ENCODE measurements at regions of chr2 and their contacts with region 1.

Region 1: DNA sequence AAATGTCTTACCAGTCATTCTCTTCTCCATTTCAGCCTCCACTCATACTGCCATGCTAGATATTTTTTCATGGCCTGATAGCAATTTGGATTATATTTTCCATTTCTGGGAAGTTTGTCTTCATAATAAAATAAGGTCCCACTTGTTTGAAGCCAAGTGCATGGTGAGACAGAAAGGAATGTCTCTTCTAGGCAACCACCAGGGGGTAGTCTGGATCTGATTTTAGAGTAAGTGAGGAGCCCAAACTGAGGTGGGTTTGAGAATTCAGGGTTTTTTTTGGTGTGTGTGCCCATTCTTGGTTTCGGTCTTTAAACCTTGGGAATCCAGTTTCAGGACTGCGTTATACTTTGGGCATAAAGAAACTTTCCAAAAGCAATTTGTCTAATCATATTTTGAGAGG is 315.5 kb downstream of the RPRM start:
- DNase-seq: no peak
- H3K4me3 ChIP-seq: no peak overlapping the region
- H3K27ac ChIP-seq: no peak overlapping the region
- H3K4me1 ChIP-seq: no peaks in the 10 kb centered on the region
- H3K27me3 ChIP-seq: no peaks in the 10 kb centered on the region
- CTCF ChIP-seq: peak; percentile 36 to 49 (median 42)
- EP300 ChIP-seq: no peak
- POLR2A ChIP-seq: no peak

Region 2: DNA sequence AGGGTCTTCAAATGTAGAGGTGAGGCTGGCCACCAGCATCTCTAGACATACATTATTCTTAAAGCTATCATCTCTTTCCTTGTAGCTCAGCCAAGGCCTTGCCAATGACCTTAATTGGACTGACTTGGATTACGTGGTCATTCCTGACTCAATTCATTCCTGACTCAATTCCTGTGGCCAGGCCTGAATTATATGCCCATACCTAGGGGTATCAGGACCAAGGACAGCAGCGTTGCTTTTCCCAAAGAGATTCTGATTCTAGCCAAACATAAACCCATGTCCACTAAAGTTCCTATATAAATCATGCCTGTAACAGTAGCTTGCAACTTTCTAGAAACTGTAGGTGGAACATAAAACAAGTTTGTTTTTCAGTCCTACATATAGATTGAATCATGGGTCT is 212.9 kb before region 1 on chr2:
- intact Hi-C with region 1: no loop called
- DNase-seq: no peak
- H3K4me3 ChIP-seq: no peak overlapping the region
- H3K27ac ChIP-seq: no peak overlapping the region
- H3K4me1 ChIP-seq: peaks cover 0 to 6% (median 0%) of the 10 kb centered on the region in 4 donors
- H3K27me3 ChIP-seq: no peaks in the 10 kb centered on the region
- CTCF ChIP-seq: no peak
- EP300 ChIP-seq: no peak
- POLR2A ChIP-seq: no peak

Region 3: DNA sequence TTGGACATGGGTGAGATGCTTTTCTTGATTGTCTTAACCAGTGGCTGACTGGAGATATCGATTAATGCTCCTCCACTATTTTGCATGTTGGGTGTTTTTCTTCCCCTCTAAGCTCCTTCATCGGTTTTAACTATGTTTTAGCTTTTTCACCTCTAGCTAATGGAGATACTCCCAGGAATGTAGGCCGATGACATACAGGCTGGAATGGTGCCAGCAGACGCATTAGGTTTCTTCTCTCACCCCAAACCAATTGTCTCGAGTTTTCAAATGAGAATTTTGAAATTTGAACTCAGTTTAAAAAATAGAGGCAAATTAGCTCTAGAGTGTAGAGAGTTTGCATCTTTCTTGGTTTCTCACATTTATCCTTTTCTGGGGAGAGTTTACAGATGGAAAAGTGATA is 67.9 kb after region 1 on chr2:
- intact Hi-C with region 1: no loop called
- DNase-seq: no peak
- H3K4me3 ChIP-seq: no peak overlapping the region
- H3K27ac ChIP-seq: no peak overlapping the region
- H3K4me1 ChIP-seq: no peaks in the 10 kb centered on the region
- H3K27me3 ChIP-seq: no peaks in the 10 kb centered on the region
- CTCF ChIP-seq: no peak
- EP300 ChIP-seq: no peak
- POLR2A ChIP-seq: no peak

Region 4: GRCh38 chr2:153519257-153519875 is 356.3 kb after region 1 on chr2:
- intact Hi-C with region 1: loop called (anchors 5 kb)
- DNase-seq: no peak
- H3K4me3 ChIP-seq: no peak overlapping the region
- H3K27ac ChIP-seq: no peak overlapping the region
- H3K4me1 ChIP-seq: no peaks in the 10 kb centered on the region
- H3K27me3 ChIP-seq: peaks cover 0 to 3% (median 0%) of the 10 kb centered on the region in 4 donors
- CTCF ChIP-seq: peak; percentile 59 to 80 (median 74)
- EP300 ChIP-seq: no peak
- POLR2A ChIP-seq: no peak